ENCODE measurements at regions of chr18 and their contacts with region 1.

Region 1: GRCh38 chr18:3889803-3890202 is 439.8 kb downstream of the TGIF1 start:
- DNase-seq: no peak
- H3K4me3 ChIP-seq: no peak overlapping the region
- H3K27ac ChIP-seq: no peak overlapping the region
- H3K4me1 ChIP-seq: peaks cover 14% of the 10 kb centered on the region
- CTCF ChIP-seq: no peak

Region 2: GRCh38 chr18:3906116-3906750 is 16.4 kb after region 1 on chr18:
- CTCF ChIA-PET with region 1: no interaction called
- POLR2A ChIA-PET with region 1: interaction called, 12 read pairs
- intact Hi-C with region 1: no loop called
- DNase-seq: no peak
- H3K4me3 ChIP-seq: no peak overlapping the region
- H3K27ac ChIP-seq: no peak overlapping the region
- H3K4me1 ChIP-seq: peaks cover 12% of the 10 kb centered on the region
- CTCF ChIP-seq: no peak

Region 3: GRCh38 chr18:3923750-3924149 is 33.9 kb after region 1 on chr18:
- CTCF ChIA-PET with region 1: no interaction called
- POLR2A ChIA-PET with region 1: no interaction called
- intact Hi-C with region 1: no loop called
- DNase-seq: no peak
- H3K4me3 ChIP-seq: no peak overlapping the region
- H3K27ac ChIP-seq: no peak overlapping the region
- H3K4me1 ChIP-seq: peaks cover 31% of the 10 kb centered on the region
- CTCF ChIP-seq: no peak

Measured in OCI-LY7 (cell line).